Activated CD8-positive, alpha-beta T cell treated with anti-CD3 and anti-CD28 coated beads, Interleukin-2, amount 10 ng/mL, durations not matched to agents 7 days and 5 days (primary cell): ENCODE measurements at regions of chr12 and their contacts with region 1.

Region 1: GRCh38 chr12:6873094-6874014 is at the start of gene SPSB2:
- DNase-seq: peak; percentile 99
- ATAC-seq: peak; percentile 78
- H3K4me3 Mint-ChIP-seq: peak within 1 kb of the TSS; percentile 94
- H3K27ac Mint-ChIP-seq: peak within 1 kb of the TSS; percentile 96
- H3K4me1 Mint-ChIP-seq: peaks cover 56% of the 10 kb centered on the region
- H3K27me3 Mint-ChIP-seq: no peaks in the 10 kb centered on the region
- total RNA-seq, gene SPSB2: 10.0 to 11.2 TPM

Region 2: DNA sequence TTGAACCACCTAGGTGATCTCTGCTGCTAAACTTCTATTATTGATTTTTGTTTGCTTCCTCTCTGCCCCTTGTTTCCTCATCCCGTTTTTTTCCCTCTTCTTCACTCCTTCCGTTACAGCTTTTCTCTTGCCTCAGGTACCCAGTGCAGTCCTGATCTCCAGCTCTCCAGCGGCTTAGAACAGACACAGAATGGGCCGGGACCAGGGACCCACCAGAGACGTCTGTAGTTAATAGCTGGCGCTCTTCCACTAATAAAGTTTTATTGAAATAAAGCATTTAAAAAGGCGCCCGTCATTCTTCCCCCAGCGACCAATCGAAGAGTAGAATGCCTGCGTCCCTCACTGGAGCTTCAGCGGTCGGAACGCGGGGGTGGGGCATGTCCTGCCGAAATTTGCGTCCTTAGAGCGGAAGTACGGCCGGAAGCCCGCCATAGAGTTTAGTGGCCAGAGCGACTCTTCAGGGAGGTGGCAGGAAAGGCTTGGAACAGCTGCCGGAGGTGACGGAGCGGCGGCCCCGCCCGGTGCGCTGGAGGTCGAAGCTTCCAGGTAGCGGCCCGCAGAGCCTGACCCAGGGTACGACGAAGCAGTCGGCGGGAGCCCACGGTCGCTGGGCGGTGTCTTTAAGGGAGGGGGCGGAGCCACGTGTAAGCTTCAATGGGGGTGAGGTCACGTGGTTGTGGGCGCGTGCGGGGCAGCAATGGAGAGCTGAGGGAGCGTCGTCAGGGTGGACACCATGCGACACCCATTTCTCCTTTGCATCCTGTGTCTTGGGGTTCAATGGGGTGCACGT is 149.6 kb before region 1 on chr12 and contains the start of gene COPS7A:
- CTCF ChIA-PET with region 1: interaction called, 10 read pairs
- POLR2A ChIA-PET with region 1: interaction called, 7 read pairs
- DNase-seq: peak; percentile 100
- ATAC-seq: peak; percentile 96
- H3K4me3 Mint-ChIP-seq: peak within 1 kb of the TSS; percentile 84
- H3K27ac Mint-ChIP-seq: peak within 1 kb of the TSS; percentile 93
- H3K4me1 Mint-ChIP-seq: peaks cover 29% of the 10 kb centered on the region
- H3K27me3 Mint-ChIP-seq: no peaks in the 10 kb centered on the region
- total RNA-seq, gene COPS7A: 26.9 to 29.7 TPM

Region 3: GRCh38 chr12:6851921-6852650 is 21.3 kb before region 1 on chr12 and contains the start of gene USP5:
- CTCF ChIA-PET with region 1: interaction called, 121 read pairs
- POLR2A ChIA-PET with region 1: interaction called, 93 read pairs
- DNase-seq: peak; percentile 99
- ATAC-seq: peak; percentile 83
- H3K4me3 Mint-ChIP-seq: peak within 1 kb of the TSS; percentile 90
- H3K27ac Mint-ChIP-seq: peak within 1 kb of the TSS; percentile 98
- H3K4me1 Mint-ChIP-seq: peaks cover 44% of the 10 kb centered on the region
- H3K27me3 Mint-ChIP-seq: no peaks in the 10 kb centered on the region
- total RNA-seq, gene USP5: 105 to 108 TPM

Region 4: GRCh38 chr12:6904280-6905278 is 31.2 kb after region 1 on chr12 and contains the start of gene LRRC23:
- CTCF ChIA-PET with region 1: interaction called, 38 read pairs
- POLR2A ChIA-PET with region 1: interaction called, 12 read pairs
- DNase-seq: peak; percentile 99
- ATAC-seq: peak; percentile 95
- H3K4me3 Mint-ChIP-seq: no peak within 1 kb of the TSS
- H3K27ac Mint-ChIP-seq: no peak within 1 kb of the TSS
- H3K4me1 Mint-ChIP-seq: peaks cover 11% of the 10 kb centered on the region
- H3K27me3 Mint-ChIP-seq: no peaks in the 10 kb centered on the region
- total RNA-seq, gene LRRC23: 6.5 to 8.6 TPM

Region 5: DNA sequence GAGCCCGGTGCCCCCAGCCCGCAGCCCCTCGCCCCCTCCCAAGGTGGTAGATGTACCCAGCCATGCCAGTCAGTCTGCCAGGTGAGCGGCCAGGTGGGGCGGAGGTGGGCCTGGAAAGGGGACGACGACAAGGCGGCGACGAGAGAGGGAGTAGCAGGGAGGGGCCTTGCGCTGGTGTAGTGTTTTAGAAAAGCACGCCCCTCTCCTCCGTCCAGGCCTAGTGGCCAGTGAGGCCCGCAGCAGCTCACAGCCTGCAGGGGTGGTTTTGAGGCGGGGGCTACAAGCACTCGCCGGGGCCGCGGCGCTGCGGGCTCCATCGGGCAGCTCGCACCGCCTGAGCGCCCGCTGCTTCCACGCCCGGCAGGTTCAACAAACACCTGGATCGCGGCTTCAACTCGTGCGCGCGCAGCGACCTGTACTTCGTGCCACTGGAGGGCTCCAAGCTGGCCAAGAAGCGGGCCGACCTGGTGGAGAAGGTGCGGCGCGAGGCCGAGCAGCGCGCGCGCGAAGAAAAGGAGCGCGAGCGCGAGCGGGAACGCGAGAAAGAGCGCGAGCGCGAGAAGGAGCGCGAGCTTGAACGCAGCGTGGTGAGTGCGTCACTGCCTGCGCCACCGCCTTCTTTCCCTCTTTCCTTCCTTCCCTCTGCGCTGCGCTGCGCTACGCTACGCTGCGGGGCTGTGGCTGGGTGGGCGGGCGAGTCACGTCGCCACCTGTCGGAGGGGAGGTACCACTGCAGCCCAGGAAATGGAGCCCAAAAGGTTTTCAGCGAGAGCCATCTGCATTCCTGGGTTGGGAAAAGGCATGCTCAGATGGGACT is 64.3 kb after region 1 on chr12:
- CTCF ChIA-PET with region 1: interaction called, 37 read pairs
- POLR2A ChIA-PET with region 1: interaction called, 41 read pairs
- DNase-seq: peak; percentile 96
- ATAC-seq: peak; percentile 93
- H3K4me3 Mint-ChIP-seq: peak overlapping the region; percentile 82
- H3K27ac Mint-ChIP-seq: peak overlapping the region; percentile 97
- H3K4me1 Mint-ChIP-seq: peaks cover 62% of the 10 kb centered on the region
- H3K27me3 Mint-ChIP-seq: no peaks in the 10 kb centered on the region

Region 6: DNA sequence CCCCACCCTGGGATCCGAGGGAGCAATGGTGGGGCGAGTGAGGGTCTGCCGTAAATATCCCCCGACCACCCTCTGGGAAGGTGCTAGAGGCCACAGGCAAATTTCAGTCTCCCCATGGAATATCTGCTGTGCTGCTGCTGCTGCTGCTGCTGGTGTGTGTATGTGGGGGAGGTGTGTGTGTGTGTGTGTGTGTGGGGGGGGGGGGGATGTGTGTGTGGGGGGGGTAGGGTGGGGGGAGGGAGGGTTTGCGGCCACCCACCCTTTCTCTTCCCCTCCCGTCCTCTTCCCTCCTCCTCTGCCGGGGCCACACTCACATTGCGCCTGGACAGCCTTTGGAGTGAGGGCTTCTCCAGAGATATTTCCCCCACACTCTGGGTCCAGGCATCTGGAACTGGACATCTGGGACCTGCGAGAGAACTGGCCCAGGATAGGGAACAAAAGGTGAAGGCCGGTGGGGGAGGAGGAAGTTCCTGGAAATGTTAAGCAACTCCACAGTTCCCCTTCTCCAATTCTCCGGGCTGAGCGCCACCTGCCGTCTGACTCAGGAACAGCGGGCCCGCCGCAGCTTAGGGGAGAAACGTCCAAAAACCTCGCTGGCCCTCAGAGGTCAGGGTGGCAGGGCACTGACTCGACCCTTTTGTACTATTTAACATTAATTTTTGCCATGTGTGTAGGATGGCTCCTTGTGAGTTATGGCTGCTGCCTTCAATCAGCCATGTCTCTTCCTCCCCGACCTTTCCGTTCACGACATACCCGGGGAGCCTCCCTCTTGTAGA is 235.6 kb after region 1 on chr12 and contains the start of gene C1RL:
- CTCF ChIA-PET with region 1: interaction called, 14 read pairs
- POLR2A ChIA-PET with region 1: interaction called, 4 read pairs
- DNase-seq: peak; percentile 85
- ATAC-seq: peak; percentile 27
- H3K4me3 Mint-ChIP-seq: peak within 1 kb of the TSS; percentile 95
- H3K27ac Mint-ChIP-seq: peak within 1 kb of the TSS; percentile 92
- H3K4me1 Mint-ChIP-seq: peaks cover 58% of the 10 kb centered on the region
- H3K27me3 Mint-ChIP-seq: no peaks in the 10 kb centered on the region
- total RNA-seq, gene C1RL: 21.5 to 23.3 TPM